ENCODE measurements at regions of chr9 and their contacts with region 1.

Region 1: DNA sequence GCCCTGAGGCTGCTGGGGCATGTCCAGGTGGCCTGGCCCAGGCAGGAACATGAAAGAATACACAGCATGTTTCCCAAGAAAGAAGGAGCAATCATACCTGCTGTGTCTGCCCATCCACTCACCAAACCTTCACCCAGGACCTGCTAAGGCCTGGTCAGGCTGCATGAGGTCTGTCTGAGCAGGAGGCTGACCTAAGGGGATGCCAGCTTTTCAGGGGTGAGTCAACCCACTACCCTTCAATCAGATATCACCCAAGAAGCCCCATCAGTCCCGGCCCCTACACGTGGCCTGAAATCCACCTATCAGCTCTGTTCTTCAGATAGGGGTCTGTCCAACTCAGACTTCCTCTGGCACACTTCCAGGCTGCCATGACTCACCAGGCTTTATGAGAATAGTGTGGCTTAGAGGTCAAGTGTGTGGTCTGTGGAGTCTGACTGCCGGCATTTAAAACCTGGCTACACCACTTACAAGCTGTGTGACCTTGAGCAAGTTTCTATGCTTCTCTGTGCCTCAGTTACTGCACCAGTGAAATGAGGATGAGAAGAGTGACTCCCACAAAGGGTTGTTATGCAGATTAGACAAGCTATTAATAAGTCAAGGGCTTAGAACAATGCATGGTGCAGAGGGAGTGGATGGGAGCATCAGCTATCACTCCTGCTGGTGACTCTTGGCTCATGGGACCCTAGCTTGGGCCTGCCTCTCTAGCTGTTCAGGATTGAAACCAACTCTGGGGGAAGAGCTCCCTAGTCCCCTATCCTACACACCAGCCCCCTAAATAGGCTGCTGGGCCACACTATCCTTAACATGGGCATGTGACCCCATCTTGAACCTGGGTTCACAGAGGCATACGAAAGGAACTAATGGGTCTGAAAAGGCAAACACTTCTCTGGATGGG is 130.3 kb downstream of the PAX5 start:
- DNase-seq: no peak
- ATAC-seq: peak in 2 of 8 donors; percentile 48 to 50
- H3K4me3 ChIP-seq: no peak overlapping the region
- H3K27ac ChIP-seq: no peak overlapping the region
- H3K4me1 ChIP-seq: no peaks in the 10 kb centered on the region
- H3K27me3 ChIP-seq: peaks cover 0 to 54% (median 39%) of the 10 kb centered on the region in 7 donors
- CTCF ChIP-seq: no peak

Region 2: DNA sequence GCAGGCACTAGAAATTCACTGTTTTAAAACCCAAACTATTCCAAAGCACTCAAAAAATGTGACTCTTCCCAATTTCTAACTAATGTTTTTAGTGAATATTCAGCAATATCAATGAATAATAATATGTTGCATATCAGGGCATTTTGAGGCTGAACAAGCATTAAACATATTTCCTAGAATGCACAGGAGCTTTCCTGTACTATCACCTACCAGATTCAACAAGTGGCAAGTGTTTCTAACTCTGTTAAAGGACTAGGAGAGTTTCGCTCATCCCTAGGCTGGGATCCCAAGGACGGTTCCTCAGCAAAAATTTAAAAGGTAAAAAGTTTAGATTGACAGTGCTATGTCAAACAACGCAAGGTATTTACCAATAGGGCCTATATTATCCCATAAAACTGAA is 666.6 kb before region 1 on chr9:
- intact Hi-C with region 1: no loop called
- DNase-seq: no peak
- ATAC-seq: no peak
- H3K4me3 ChIP-seq: no peak overlapping the region
- H3K27ac ChIP-seq: no peak overlapping the region
- H3K4me1 ChIP-seq: no peaks in the 10 kb centered on the region
- H3K27me3 ChIP-seq: no peaks in the 10 kb centered on the region
- CTCF ChIP-seq: no peak

Region 3: DNA sequence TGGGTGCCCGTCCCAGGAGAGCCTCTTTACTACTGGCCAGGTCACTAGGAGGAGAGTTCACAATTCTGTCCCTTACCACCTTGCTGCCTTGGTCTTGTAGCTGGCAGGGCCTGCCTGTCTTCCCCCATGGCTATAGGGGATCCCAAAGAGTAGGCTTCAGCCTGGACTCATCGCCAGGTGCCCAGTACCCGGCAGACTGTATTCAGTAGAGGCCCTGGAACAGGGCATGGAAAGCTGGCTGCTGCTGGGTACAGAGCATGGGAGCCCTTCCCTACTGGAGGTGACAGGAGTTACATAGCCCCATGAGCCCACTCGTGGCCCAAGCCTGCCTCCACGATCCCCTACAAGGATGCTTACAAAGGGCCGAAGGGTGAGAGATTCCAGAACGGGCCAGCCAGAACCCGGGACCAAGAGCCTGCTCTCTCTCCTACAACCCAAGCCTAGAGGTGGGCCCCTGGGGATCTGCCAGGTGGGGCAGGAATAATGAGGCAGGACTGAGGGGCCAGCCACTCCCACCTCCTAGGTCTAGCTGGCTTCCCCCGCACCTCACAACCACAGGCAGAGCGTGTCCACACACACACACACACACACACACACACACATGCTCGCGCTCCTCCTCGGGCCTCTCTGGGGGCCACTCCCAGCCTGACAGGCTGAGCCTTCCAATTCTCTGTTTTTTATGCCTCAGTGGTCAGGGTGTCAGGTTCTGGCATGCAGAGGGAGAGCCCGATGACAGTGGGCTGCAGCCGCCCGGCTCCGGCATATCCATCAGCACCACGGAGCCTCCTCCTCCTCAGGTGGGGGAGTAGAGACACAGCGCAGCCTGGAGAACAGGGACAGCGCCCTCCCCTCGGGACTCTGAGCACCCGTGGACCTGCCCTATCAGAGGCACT is 55.8 kb before region 1 on chr9:
- intact Hi-C with region 1: loop called in 1 of 10 experiments (anchors 10 kb)
- DNase-seq: no peak
- ATAC-seq: no peak
- H3K4me3 ChIP-seq: no peak overlapping the region
- H3K27ac ChIP-seq: no peak overlapping the region
- H3K4me1 ChIP-seq: no peaks in the 10 kb centered on the region
- H3K27me3 ChIP-seq: peaks cover 0 to 60% (median 28%) of the 10 kb centered on the region in 7 donors
- CTCF ChIP-seq: no peak

Region 4: GRCh38 chr9:37243588-37244345 is 340.0 kb after region 1 on chr9:
- intact Hi-C with region 1: loop called in 1 of 10 experiments (anchors 5 kb)
- DNase-seq: no peak
- ATAC-seq: no peak
- H3K4me3 ChIP-seq: no peak overlapping the region
- H3K27ac ChIP-seq: no peak overlapping the region
- H3K4me1 ChIP-seq: peaks cover 0 to 12% (median 0%) of the 10 kb centered on the region in 9 donors
- H3K27me3 ChIP-seq: no peaks in the 10 kb centered on the region
- CTCF ChIP-seq: no peak

Measured in heart right ventricle (tissue), 16 donors.